MCF 10A (cell line): ENCODE measurements at regions of chr7 and their contacts with region 1.

Region 1: DNA sequence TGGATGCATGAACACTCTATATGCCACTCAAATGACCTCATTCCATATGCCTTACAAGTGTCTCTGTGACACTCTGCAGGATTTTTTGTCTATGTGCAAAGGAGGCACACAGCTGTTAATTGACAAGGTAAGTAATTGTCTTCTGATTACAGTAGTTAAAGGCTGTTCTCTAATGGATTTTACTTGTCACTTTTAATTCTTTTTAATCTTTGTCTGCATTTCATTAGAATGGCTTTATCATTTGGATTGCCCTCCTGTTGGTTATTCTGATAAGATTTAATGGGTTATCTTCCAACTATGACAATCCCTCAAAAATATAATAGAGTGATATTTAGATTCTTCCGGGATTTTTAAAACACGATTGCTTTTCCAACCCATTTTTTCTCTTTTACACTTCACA is 290.0 kb upstream of the TEX47 start:
- DNase-seq: no peak
- H3K4me3 Mint-ChIP-seq: no peak overlapping the region
- H3K27ac Mint-ChIP-seq: no peak overlapping the region
- H3K4me1 Mint-ChIP-seq: no peaks in the 10 kb centered on the region
- H3K27me3 Mint-ChIP-seq: no peaks in the 10 kb centered on the region
- CTCF ChIP-seq: no peak

Region 2: GRCh38 chr7:89029864-89030263 is 55.7 kb before region 1 on chr7:
- CTCF ChIA-PET with region 1: no interaction called
- POLR2A ChIA-PET with region 1: no interaction called
- intact Hi-C with region 1: no loop called
- DNase-seq: no peak
- H3K4me3 Mint-ChIP-seq: no peak overlapping the region
- H3K27ac Mint-ChIP-seq: no peak overlapping the region
- H3K4me1 Mint-ChIP-seq: no peaks in the 10 kb centered on the region
- H3K27me3 Mint-ChIP-seq: no peaks in the 10 kb centered on the region
- CTCF ChIP-seq: no peak

Region 3: DNA sequence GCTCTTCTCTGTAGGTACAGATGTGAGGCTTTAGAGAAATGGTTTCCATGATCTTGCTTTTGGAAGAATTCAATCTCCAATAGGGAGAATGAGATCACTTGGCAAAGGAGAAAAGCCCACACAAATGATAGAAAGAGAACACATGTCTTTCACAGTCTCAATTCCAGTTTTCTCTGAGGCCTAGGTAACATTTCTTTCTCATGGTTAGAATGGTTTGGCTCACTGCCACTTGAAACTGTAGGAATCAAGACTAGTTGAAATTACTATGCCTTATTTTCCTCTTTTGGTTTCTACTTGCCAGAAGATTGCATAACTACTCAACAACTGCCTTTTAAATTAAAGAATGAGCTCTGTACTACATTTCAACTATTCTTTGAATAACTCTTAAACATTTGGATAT is 13.5 kb before region 1 on chr7:
- CTCF ChIA-PET with region 1: no interaction called
- POLR2A ChIA-PET with region 1: no interaction called
- intact Hi-C with region 1: no loop called
- DNase-seq: no peak
- H3K4me3 Mint-ChIP-seq: no peak overlapping the region
- H3K27ac Mint-ChIP-seq: no peak overlapping the region
- H3K4me1 Mint-ChIP-seq: no peaks in the 10 kb centered on the region
- H3K27me3 Mint-ChIP-seq: no peaks in the 10 kb centered on the region
- CTCF ChIP-seq: no peak

Region 4: GRCh38 chr7:89103564-89103963 is 18.0 kb after region 1 on chr7:
- CTCF ChIA-PET with region 1: no interaction called
- POLR2A ChIA-PET with region 1: no interaction called
- intact Hi-C with region 1: loop called (anchors 1 kb)
- DNase-seq: no peak
- H3K4me3 Mint-ChIP-seq: no peak overlapping the region
- H3K27ac Mint-ChIP-seq: no peak overlapping the region
- H3K4me1 Mint-ChIP-seq: no peaks in the 10 kb centered on the region
- H3K27me3 Mint-ChIP-seq: peaks cover 7% of the 10 kb centered on the region
- CTCF ChIP-seq: no peak